Esophagus muscularis mucosa (tissue), 4 donors: ENCODE measurements at regions of chr17 and their contacts with region 1.

Region 1: GRCh38 chr17:61251939-61252896 is 147.4 kb upstream of the TBX2 start:
- DNase-seq: peak; percentile 98
- H3K4me3 ChIP-seq: peak overlapping the region in 3 of 4 donors; percentile 1 to 13 (median 11)
- H3K27ac ChIP-seq: peak overlapping the region; percentile 82 to 87 (median 83)
- H3K4me1 ChIP-seq: peaks cover 56 to 74% (median 69%) of the 10 kb centered on the region in 4 donors
- H3K27me3 ChIP-seq: no peaks in the 10 kb centered on the region
- CTCF ChIP-seq: no peak
- EP300 ChIP-seq: peak; percentile 63
- POLR2A ChIP-seq: no peak

Region 2: GRCh38 chr17:61201232-61201640 is 51.0 kb before region 1 on chr17:
- intact Hi-C with region 1: loop called (anchors 5 kb)
- DNase-seq: no peak
- H3K4me3 ChIP-seq: no peak overlapping the region
- H3K27ac ChIP-seq: peak overlapping the region; percentile 68 to 78 (median 72)
- H3K4me1 ChIP-seq: peaks cover 3 to 68% (median 61%) of the 10 kb centered on the region in 4 donors
- H3K27me3 ChIP-seq: no peaks in the 10 kb centered on the region
- CTCF ChIP-seq: no peak
- EP300 ChIP-seq: no peak
- POLR2A ChIP-seq: no peak

Region 3: GRCh38 chr17:61294777-61295176 is 42.6 kb after region 1 on chr17:
- intact Hi-C with region 1: loop called (anchors 5 kb)
- DNase-seq: no peak
- H3K4me3 ChIP-seq: no peak overlapping the region
- H3K27ac ChIP-seq: peak overlapping the region; percentile 24 to 62 (median 38)
- H3K4me1 ChIP-seq: peaks cover 12 to 45% (median 44%) of the 10 kb centered on the region in 4 donors
- H3K27me3 ChIP-seq: no peaks in the 10 kb centered on the region
- CTCF ChIP-seq: no peak
- EP300 ChIP-seq: no peak
- POLR2A ChIP-seq: no peak